Mammary epithelial cell (primary cell): ENCODE measurements at regions of chr5 and their contacts with region 1.

Region 1: DNA sequence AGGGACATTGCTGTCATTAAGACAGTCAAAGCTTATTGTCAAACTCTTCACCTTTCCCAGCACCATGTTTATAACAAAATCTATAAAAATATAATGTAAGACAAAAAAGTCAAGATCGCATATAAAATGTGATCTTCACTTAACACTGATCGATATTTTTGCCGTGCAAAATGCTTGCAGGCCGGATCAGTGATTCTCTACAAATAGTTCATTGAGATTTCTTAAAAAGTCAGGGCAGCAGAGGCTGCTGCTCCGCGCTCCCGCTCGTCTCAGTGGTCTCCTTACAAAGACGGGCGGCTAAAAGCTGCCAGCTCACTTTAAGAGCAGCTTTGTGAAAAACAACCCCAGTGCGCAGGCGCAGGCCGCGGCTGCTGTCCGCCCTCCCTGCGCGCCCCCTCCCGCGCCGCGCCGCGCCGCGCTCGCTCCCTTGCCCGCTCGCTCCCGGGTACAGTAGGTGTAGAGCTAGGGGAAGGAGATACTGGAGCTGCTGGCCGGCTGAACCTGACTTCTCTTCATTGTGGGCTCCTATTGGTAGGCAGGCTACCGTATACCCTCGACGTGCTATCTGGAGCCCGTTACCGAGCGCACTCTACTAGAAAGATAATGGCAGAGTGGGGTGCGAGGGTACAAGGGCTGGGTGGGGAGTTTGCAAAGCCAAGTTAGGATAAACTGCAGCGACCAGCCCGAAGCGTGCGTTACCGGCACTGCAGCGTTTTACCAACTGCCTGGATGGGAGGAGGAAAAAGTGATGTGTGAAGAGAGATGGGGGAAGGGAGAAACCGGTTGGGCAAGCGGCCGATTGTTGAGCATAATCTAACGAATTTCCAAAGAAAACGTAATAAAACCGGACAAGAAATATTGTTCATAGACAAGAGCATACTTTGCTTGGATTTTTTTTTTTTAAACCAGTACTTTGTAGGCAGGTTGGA is at the start of gene ARRDC3:
- DNase-seq: peak; percentile 94
- H3K4me3 ChIP-seq: peak within 1 kb of the TSS; percentile 65 to 100 (median 91)
- H3K27ac ChIP-seq: peak within 1 kb of the TSS; percentile 100
- H3K4me1 ChIP-seq: peaks cover 3% of the 10 kb centered on the region
- H3K27me3 ChIP-seq: no peaks in the 10 kb centered on the region
- CTCF ChIP-seq: no peak
- total RNA-seq, gene ARRDC3: 26.2 to 48.3 TPM

Region 2: GRCh38 chr5:90932052-90932699 is 451.1 kb before region 1 on chr5:
- CTCF ChIA-PET with region 1: interaction called, 4 read pairs
- dilution Hi-C with region 1: no loop called
- in situ Hi-C with region 1: loop called in 1 of 2 experiments (anchors 25 kb)
- intact Hi-C with region 1: loop called (anchors 2 kb)
- DNase-seq: peak; percentile 56
- H3K4me3 ChIP-seq: no peak overlapping the region
- H3K27ac ChIP-seq: no peak overlapping the region
- H3K4me1 ChIP-seq: no peaks in the 10 kb centered on the region
- H3K27me3 ChIP-seq: no peaks in the 10 kb centered on the region
- CTCF ChIP-seq: peak; percentile 73 to 84

Region 3: GRCh38 chr5:91162534-91163381 is 220.5 kb before region 1 on chr5:
- CTCF ChIA-PET with region 1: no interaction called
- dilution Hi-C with region 1: no loop called
- in situ Hi-C with region 1: loop called in 1 of 2 experiments (anchors 5 kb)
- intact Hi-C with region 1: loop called (anchors 2 kb)
- DNase-seq: peak; percentile 98
- H3K4me3 ChIP-seq: peak overlapping the region in 2 of 3 experiments; percentile 1 to 30
- H3K27ac ChIP-seq: peak overlapping the region; percentile 96
- H3K4me1 ChIP-seq: peaks cover 46% of the 10 kb centered on the region
- H3K27me3 ChIP-seq: no peaks in the 10 kb centered on the region
- CTCF ChIP-seq: no peak

Region 4: DNA sequence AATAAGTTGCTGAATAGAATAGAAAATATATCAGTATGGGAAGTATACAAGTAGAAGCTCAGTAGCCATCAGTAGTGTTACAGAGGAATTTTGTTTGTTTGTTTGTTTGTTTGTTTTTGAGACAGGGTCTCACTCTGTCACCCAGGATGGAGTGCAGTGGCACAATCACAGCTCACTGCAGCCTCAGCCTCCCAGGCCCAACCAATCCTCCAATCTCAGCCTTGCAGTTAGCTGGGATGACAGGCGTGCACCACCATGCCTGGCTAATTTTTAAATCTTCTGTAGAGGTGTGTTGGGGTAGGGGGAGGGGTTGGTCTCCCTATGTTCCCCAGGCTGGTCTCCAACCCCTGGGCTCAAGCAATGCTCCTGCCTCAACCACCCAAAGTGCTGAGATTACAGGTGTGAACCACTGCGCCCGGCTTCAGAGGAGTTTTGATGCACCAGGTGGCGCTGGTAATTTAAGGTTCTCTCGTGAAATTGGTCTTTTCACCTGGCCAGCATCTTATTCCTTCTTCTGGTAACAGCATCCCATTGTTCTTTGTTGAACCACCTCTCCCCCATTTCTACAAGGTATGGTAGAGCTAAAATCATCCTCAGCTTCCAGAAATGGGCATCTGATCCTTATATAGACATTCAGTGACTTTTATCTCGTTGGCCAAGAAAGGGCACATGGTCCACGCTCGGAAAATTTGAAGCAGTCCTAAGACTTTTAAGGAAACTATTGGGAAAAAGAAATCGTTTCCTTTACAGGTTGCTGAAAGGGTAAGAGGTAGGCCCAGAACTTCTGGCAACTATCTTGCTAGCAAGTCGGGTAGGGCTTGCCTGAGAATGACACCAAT is 157.2 kb before region 1 on chr5:
- CTCF ChIA-PET with region 1: interaction called, 7 read pairs
- dilution Hi-C with region 1: loop called (anchors 5 kb)
- in situ Hi-C with region 1: loop called (anchors 5 kb)
- intact Hi-C with region 1: loop called (anchors 1 kb)
- DNase-seq: peak; percentile 46
- H3K4me3 ChIP-seq: no peak overlapping the region
- H3K27ac ChIP-seq: no peak overlapping the region
- H3K4me1 ChIP-seq: peaks cover 9% of the 10 kb centered on the region
- H3K27me3 ChIP-seq: no peaks in the 10 kb centered on the region
- CTCF ChIP-seq: peak; percentile 47 to 69

Region 5: GRCh38 chr5:91311697-91312501 is 71.4 kb before region 1 on chr5:
- CTCF ChIA-PET with region 1: no interaction called
- dilution Hi-C with region 1: loop called (anchors 5 kb)
- in situ Hi-C with region 1: no loop called
- intact Hi-C with region 1: loop called (anchors 1 kb)
- DNase-seq: peak; percentile 97
- H3K4me3 ChIP-seq: no peak overlapping the region
- H3K27ac ChIP-seq: peak overlapping the region; percentile 91
- H3K4me1 ChIP-seq: peaks cover 45% of the 10 kb centered on the region
- H3K27me3 ChIP-seq: no peaks in the 10 kb centered on the region
- CTCF ChIP-seq: no peak